Activated naive CD4-positive, alpha-beta T cell treated with anti-CD3 and anti-CD28 coated beads, Interleukin-2, amount 10 ng/mL, durations not matched to agents 7 days and 5 days (primary cell): ENCODE measurements at regions of chr21 and their contacts with region 1.

Region 1: GRCh38 chr21:28745131-28746016 is 247.3 kb downstream of the LTN1 start:
- DNase-seq: peak; percentile 78
- H3K4me3 Mint-ChIP-seq: no peak overlapping the region
- H3K27ac Mint-ChIP-seq: no peak overlapping the region
- H3K4me1 Mint-ChIP-seq: no peaks in the 10 kb centered on the region
- H3K27me3 Mint-ChIP-seq: no peaks in the 10 kb centered on the region

Region 2: GRCh38 chr21:26850108-26850643 is 1895.2 kb before region 1 on chr21:
- CTCF ChIA-PET with region 1: interaction called, 12 read pairs
- DNase-seq: no peak
- H3K4me3 Mint-ChIP-seq: no peak overlapping the region
- H3K27ac Mint-ChIP-seq: no peak overlapping the region
- H3K4me1 Mint-ChIP-seq: peaks cover 19% of the 10 kb centered on the region
- H3K27me3 Mint-ChIP-seq: peaks cover 37% of the 10 kb centered on the region

Region 3: DNA sequence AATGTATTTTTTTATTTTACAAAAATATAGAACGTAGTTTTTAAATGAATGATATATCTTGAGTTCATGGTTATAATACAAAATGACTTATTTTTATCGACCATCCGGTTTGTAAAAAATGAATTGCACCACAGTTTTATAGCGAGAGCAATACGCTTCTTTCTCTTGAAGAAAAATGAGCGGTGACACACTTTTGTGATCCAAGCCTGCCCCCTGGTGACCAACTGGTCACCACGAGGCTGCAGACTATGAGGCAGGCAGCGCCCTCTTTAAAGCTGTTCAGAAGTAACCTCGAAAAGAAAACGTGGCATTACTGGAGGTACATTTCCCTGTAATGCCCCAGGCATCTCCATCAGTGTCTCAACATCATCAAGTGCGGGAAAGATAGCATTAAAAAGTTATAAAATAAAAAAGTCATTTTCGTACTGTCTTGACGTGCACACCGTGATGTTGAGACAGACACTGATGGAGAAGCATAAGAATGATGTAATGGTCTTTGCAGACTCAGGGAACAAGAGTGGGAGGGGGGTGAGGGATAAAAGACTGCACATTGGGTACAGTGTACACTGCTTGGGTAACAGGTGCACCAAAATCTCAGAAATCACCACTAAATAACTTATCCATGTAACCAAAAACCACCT is 1044.3 kb before region 1 on chr21:
- CTCF ChIA-PET with region 1: interaction called, 12 read pairs
- DNase-seq: peak; percentile 71
- H3K4me3 Mint-ChIP-seq: no peak overlapping the region
- H3K27ac Mint-ChIP-seq: no peak overlapping the region
- H3K4me1 Mint-ChIP-seq: no peaks in the 10 kb centered on the region
- H3K27me3 Mint-ChIP-seq: no peaks in the 10 kb centered on the region

Region 4: GRCh38 chr21:28516991-28517592 is 228.3 kb before region 1 on chr21:
- CTCF ChIA-PET with region 1: interaction called, 91 read pairs
- DNase-seq: peak; percentile 75
- H3K4me3 Mint-ChIP-seq: no peak overlapping the region
- H3K27ac Mint-ChIP-seq: no peak overlapping the region
- H3K4me1 Mint-ChIP-seq: no peaks in the 10 kb centered on the region
- H3K27me3 Mint-ChIP-seq: no peaks in the 10 kb centered on the region

Region 5: GRCh38 chr21:28657566-28657965 is 87.8 kb before region 1 on chr21:
- CTCF ChIA-PET with region 1: no interaction called
- DNase-seq: no peak
- H3K4me3 Mint-ChIP-seq: no peak overlapping the region
- H3K27ac Mint-ChIP-seq: no peak overlapping the region
- H3K4me1 Mint-ChIP-seq: no peaks in the 10 kb centered on the region
- H3K27me3 Mint-ChIP-seq: no peaks in the 10 kb centered on the region

Region 6: DNA sequence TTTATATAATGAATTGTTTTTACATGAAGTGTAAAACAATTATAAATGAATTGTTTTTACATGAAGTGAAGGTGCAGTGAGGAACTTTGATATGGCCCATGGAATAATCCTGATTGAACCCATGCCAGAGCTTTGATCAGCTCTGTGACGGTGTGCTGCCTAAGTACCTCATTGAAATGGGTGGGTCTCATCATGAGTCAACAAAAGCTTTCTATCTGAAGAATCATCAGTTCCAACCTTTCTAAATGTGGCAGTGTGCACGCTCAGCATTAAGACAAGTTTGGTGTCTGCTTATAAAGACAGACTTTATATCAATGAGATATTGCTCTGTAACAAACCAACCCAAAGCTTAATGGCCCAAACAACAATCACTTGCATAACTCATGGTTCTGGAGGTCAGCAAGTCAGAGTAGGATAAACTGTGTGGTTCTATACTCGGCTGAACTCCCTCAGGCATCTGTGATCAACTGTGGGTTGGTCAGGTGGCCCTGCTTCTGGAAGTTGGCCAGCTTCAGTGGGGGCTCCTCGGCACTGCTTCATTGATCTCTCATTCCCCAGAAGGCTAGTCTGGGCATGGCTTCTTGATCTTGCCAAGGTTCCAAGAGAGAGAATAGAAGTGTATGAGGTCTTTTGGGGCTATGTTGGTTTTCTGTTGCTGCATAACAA is 10.7 kb before region 1 on chr21:
- CTCF ChIA-PET with region 1: interaction called, 28 read pairs
- DNase-seq: no peak
- H3K4me3 Mint-ChIP-seq: no peak overlapping the region
- H3K27ac Mint-ChIP-seq: no peak overlapping the region
- H3K4me1 Mint-ChIP-seq: peaks cover 3% of the 10 kb centered on the region
- H3K27me3 Mint-ChIP-seq: no peaks in the 10 kb centered on the region

Region 7: DNA sequence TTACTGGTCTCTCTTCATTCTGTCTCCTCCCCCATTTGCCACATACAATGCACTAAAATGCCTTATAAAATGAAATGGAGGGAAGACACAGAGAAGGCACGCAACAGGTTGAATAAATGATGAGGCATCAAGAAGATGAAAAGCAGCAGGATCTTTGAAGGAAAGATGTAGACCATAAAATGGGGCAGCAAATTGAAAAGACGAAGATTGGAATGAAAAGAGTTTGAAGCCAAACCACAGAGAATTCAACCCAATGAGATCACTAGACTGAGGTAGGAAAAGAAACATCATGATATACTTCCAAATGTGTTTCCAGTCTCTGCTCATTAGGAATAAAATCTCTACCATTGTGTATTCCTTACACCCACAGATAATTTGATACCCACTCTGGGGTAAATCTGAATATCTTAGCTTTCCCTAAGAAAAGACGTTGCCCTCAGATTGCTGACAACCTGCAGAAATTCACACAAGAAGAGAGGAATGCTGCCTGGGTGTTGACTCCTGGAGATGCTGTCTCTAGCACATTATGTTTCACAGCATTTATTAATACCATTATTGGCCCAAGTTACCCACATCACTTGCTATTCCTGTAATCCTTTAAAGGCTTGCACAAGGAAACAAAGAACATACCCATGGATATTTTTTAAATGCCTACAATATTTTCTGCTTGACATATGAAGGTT is 16.4 kb after region 1 on chr21:
- CTCF ChIA-PET with region 1: interaction called, 31 read pairs
- DNase-seq: no peak
- H3K4me3 Mint-ChIP-seq: no peak overlapping the region
- H3K27ac Mint-ChIP-seq: no peak overlapping the region
- H3K4me1 Mint-ChIP-seq: no peaks in the 10 kb centered on the region
- H3K27me3 Mint-ChIP-seq: no peaks in the 10 kb centered on the region

Region 8: DNA sequence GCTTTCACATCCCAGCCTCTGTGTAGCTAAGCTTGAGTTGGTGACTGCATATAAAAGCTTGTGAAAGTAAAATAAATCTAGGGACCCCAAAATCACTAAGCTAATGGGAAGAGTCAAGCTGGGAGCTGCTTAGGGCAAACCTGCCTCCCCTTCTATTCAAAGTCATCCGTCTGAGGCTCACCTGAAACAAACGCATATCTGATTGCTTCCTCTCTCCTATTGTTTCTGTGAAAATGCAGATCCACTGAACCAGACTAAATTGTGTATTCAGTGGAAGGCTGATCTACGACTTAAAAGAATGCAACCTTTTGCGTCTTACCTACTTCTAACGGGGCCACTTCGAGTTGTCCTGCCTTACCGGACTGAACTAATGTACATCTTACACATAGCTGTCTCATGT is 177.0 kb after region 1 on chr21:
- CTCF ChIA-PET with region 1: no interaction called
- DNase-seq: no peak
- H3K4me3 Mint-ChIP-seq: no peak overlapping the region
- H3K27ac Mint-ChIP-seq: no peak overlapping the region
- H3K4me1 Mint-ChIP-seq: no peaks in the 10 kb centered on the region
- H3K27me3 Mint-ChIP-seq: no peaks in the 10 kb centered on the region

Region 9: GRCh38 chr21:28938726-28939125 is 193.4 kb after region 1 on chr21:
- CTCF ChIA-PET with region 1: interaction called, 28 read pairs
- DNase-seq: no peak
- H3K4me3 Mint-ChIP-seq: no peak overlapping the region
- H3K27ac Mint-ChIP-seq: no peak overlapping the region
- H3K4me1 Mint-ChIP-seq: no peaks in the 10 kb centered on the region
- H3K27me3 Mint-ChIP-seq: no peaks in the 10 kb centered on the region

Region 10: GRCh38 chr21:28971171-28971570 is 225.8 kb after region 1 on chr21:
- CTCF ChIA-PET with region 1: no interaction called
- DNase-seq: no peak
- H3K4me3 Mint-ChIP-seq: no peak overlapping the region
- H3K27ac Mint-ChIP-seq: no peak overlapping the region
- H3K4me1 Mint-ChIP-seq: no peaks in the 10 kb centered on the region
- H3K27me3 Mint-ChIP-seq: no peaks in the 10 kb centered on the region